BJ (cell line): ENCODE measurements at regions of chr1 and their contacts with region 1.

Region 1: GRCh38 chr1:8560611-8561544 is 243.0 kb downstream of the SLC45A1 start:
- DNase-seq: no peak
- H3K4me3 ChIP-seq: no peak overlapping the region
- H3K27me3 ChIP-seq: no peaks in the 10 kb centered on the region
- CTCF ChIP-seq: peak; percentile 82

Region 2: DNA sequence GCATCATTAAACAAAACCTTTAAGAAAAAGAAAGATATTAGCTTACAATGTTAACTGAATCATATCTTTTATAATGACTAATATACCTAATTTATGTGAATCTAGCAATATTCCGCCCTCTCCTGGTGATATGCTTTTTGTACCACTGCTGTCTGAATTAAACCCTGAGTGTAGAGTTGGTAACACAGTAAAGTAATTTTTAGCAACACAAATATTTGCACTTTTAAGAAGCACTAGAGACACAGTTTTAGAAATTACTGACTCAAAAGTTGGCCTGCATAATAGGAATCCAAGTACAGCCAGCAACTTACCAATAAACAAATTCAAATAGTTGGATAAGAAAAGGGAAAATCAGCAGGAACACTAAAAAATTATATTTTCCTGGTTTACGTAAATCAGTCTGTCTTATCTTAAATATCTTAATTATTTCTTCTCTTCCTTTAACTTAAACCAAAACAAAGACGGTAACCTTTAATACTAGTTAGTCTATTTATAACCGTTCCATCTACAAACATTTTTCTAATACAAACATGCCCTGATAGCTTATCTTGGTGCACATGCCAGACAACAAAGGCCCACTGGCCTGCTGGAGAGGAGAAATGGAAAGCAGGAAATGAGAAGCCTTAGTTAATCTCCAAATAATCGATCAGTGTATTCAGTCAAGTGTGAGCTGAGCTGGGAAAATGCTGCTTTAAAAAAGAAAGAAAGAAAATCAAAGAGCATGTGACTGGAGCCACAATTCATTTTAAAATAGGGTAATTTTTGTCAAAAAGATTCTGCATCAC is 10.5 kb after region 1 on chr1:
- CTCF ChIA-PET with region 1: interaction called, 20 read pairs
- POLR2A ChIA-PET with region 1: no interaction called
- DNase-seq: no peak
- H3K4me3 ChIP-seq: no peak overlapping the region
- H3K27me3 ChIP-seq: no peaks in the 10 kb centered on the region
- CTCF ChIP-seq: peak; percentile 42

Region 3: DNA sequence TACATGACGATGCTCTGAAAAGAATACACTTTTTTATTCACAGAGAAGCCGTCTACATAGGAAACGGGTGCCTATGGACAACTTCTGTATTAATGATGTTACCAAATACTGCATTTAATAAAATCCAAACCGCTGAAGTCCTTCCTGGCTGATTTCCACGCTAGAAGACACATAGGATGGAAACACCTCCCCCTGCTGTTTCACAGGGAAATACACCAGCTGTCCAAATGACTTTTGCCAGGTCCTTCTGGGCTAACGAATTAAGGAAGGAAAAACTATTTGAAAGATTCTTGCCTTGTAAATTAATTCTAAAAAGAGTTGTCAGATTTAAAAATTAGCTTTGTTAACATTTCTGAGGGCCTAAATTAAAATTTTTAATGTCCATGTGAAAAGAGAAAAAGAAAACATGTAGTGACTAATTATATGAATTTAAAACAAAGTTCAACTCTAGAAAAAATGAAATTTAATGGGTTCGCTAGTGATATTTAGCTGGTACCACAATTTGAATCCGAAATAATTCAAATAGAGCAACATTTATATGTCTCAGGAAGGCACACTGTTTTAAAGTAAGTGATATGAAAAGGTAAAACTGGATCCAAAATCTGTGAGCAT is 110.5 kb after region 1 on chr1:
- CTCF ChIA-PET with region 1: interaction called, 38 read pairs
- POLR2A ChIA-PET with region 1: no interaction called
- DNase-seq: no peak
- H3K4me3 ChIP-seq: no peak overlapping the region
- H3K27me3 ChIP-seq: no peaks in the 10 kb centered on the region
- CTCF ChIP-seq: peak; percentile 85

Region 4: GRCh38 chr1:8848663-8849386 is 287.9 kb after region 1 on chr1:
- CTCF ChIA-PET with region 1: interaction called, 47 read pairs
- POLR2A ChIA-PET with region 1: no interaction called
- DNase-seq: peak; percentile 60
- H3K4me3 ChIP-seq: no peak overlapping the region
- H3K27me3 ChIP-seq: 0 out of 2 replicates have a peak, but pooled peaks cover 1% of the 10 kb centered on the region
- CTCF ChIP-seq: peak; percentile 97